Left cardiac atrium (tissue), 4 donors: ENCODE measurements at regions of chr2 and their contacts with region 1.

Region 1: DNA sequence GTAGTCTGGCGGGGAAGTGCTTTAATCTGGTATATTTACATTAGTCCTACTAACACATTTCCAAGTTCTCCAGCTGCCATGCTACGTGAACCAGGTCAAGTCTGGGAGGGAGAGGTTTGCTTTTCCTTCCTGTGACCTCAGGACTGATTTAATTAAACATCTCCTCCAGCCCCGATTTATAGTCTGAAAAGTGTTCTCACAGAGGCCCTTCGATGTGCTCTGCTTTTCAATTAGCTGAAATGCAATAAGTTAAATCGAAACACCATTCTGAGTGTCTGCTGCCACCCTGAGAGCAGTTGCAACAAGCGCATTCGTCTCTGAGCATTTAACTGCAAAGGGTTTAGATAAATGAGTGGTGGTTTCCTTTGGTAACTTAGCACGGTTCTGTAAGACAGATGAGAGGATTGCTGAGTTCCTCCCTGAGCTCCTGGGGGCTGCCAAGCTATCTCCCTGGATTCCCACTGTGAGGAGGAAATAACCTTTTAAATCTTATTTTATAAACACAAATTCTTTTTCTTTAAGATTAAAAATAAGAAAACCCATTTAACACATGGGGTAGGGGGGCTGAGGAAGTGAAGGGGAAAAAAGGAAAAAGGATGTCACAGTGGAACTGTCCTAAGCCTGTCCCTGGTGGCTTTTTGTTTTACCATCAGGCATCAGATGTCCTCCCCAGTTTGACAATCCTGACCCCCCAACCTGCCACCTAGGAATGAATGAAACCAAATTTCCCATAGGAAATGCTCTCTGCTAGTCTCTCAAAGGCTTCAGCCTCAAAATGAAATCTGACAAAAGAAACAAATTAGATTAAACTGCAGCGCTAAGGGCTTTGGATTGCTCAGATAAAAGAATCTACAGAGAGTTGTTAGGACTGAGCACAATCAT is 56.5 kb upstream of the CREB1 start:
- DNase-seq: peak; percentile 62
- ATAC-seq: peak; percentile 84 to 86

Region 2: DNA sequence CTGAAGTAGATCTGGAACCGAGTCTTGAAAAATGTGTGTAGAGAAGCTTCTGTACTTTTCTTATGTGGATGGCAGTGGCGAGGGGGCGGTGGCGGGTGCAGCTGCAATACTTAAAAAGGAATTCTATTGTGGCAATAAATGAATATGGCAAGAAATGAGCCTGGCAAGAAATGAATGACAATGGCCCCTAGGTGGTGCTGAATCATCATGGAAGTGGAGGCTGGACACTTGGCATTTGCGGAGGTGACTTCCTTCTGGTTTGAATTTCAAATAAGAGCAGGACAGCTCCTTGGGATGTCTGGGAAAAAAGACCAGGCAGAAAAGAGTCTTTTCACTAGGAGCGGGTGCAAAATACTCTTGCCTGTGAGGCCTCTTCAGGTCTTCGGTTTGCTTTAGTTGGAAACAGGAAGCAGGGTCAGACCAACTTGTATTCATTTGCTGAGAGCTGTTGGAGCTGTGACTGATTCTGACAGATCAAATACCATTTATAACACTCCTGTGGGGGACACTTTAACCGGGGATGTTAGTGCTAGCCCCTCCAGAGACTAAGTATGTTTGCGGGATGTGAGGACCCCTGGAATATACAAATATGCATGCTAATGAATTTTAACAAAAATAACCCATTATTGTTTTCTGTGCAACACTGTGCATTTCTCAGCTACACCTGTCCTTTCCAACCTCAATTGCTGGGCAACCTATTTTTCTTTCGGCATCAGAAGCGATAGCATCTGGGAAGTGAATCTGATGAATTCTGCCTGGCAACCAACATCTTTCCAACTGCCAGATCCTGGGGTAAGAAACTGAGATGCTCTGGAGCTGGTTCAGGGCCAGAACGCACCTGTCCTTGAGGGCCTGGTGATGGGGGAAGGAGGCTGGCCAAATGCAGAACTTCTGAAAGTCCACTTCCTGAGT is 672.5 kb before region 1 on chr2:
- intact Hi-C with region 1: loop called (anchors 2 to 5 kb)
- DNase-seq: peak; percentile 66
- ATAC-seq: peak; percentile 77 to 82

Region 3: GRCh38 chr2:207046724-207047123 is 426.6 kb before region 1 on chr2:
- intact Hi-C with region 1: loop called in 1 of 2 experiments (anchors 5 kb)
- DNase-seq: no peak
- ATAC-seq: peak; percentile 55 to 71

Region 4: GRCh38 chr2:207223051-207223450 is 250.2 kb before region 1 on chr2:
- intact Hi-C with region 1: loop called in 1 of 2 experiments (anchors 10 kb)
- DNase-seq: no peak
- ATAC-seq: no peak